ENCODE measurements at regions of chr1 and their contacts with region 1.

Region 1: GRCh38 chr1:150235852-150236613 is at the start of gene ANP32E:
- DNase-seq: peak; percentile 90 to 98
- ATAC-seq: peak; percentile 85 to 96 (median 86)
- H3K4me3 ChIP-seq: peak within 1 kb of the TSS; percentile 97
- H3K4me3 Mint-ChIP-seq: no peak within 1 kb of the TSS
- H3K27ac ChIP-seq: peak within 1 kb of the TSS; percentile 99
- H3K27ac Mint-ChIP-seq: no peak within 1 kb of the TSS
- H3K4me1 ChIP-seq: peaks cover 14% of the 10 kb centered on the region
- H3K4me1 Mint-ChIP-seq: peaks cover 16 to 19% of the 10 kb centered on the region in 2 donors
- H3K27me3 ChIP-seq: no peaks in the 10 kb centered on the region
- H3K27me3 Mint-ChIP-seq: no peaks in the 10 kb centered on the region
- CTCF ChIP-seq: no peak
- total RNA-seq, gene ANP32E: 50.7 to 56.9 (median 55.2) TPM

Region 2: DNA sequence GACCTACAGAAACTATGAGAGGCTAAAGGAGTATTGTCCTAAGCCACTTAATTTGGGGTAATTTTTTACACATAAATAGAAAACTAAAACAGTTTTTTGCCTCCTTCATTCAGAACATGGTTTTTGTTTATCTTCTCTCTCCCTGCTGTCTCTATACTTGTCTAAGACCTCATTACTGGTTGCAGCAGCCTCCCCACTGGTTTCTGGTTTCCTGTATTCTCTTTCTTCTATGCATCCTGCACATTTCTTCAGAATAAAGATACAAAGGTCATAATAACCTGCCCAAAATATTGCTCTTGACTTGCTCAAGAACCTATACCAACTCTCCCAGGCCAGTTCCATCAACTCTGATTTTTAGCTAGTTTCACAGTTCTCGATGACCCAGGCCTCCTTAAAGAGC is 356.5 kb before region 1 on chr1:
- intact Hi-C with region 1: no loop called
- DNase-seq: peak in 1 of 2 donors; percentile 56
- ATAC-seq: no peak
- H3K4me3 ChIP-seq: no peak overlapping the region
- H3K4me3 Mint-ChIP-seq: no peak overlapping the region
- H3K27ac ChIP-seq: no peak overlapping the region
- H3K27ac Mint-ChIP-seq: no peak overlapping the region
- H3K4me1 ChIP-seq: peaks cover 5% of the 10 kb centered on the region
- H3K4me1 Mint-ChIP-seq: peaks cover 7 to 9% of the 10 kb centered on the region in 2 donors
- H3K27me3 ChIP-seq: no peaks in the 10 kb centered on the region
- H3K27me3 Mint-ChIP-seq: no peaks in the 10 kb centered on the region
- CTCF ChIP-seq: no peak

Region 3: DNA sequence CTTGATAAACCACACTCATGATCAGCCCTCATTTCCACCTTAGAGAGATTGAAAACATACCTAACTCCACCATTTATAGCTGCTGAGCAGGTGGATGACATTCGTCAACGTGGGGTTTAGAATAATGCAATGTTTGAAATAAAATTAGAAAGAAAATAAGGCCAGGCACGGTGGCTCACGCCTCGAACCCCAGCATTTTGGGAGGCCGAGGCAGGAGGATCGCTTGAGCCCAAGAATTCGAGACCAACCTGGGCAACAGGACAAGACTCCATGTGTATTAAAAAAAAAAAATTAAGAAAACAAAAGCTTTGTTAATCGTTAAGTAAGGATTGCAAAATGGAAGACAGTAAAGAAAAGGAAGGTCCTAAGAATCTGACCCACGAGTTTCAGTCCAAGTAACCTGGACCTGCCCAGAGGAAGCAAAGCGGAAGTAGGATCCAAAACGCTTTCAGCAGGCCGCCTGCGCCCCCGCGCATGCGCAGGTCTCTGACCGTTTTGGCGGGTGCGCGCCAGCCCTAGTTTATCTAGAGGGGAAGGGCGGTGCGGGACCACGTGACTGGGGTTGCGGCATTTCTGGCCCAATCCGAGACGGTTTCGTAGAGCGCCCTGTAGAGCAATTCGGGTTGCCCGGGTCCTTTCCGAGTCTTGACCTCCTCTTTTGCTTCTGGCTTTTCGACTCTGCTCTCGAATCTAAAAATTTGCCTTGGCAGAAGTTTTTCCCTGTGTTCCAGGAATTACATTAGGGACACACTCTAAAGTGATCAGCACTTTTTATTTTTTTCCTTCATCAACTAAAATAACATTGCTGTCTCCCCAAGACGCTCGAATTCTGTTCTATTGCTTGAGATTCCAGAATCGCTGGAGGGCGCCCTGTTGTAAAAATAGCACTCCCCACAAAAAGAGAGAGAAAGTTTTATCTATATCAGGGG is 22.6 kb before region 1 on chr1:
- intact Hi-C with region 1: loop called (anchors 1 kb)
- DNase-seq: peak; percentile 88 to 96
- ATAC-seq: peak; percentile 98 to 100 (median 99)
- H3K4me3 ChIP-seq: peak overlapping the region; percentile 59
- H3K4me3 Mint-ChIP-seq: peak overlapping the region; percentile 91
- H3K27ac ChIP-seq: peak overlapping the region; percentile 89
- H3K27ac Mint-ChIP-seq: peak overlapping the region; percentile 96 to 97
- H3K4me1 ChIP-seq: peaks cover 11% of the 10 kb centered on the region
- H3K4me1 Mint-ChIP-seq: peaks cover 7 to 12% of the 10 kb centered on the region in 2 donors
- H3K27me3 ChIP-seq: no peaks in the 10 kb centered on the region
- H3K27me3 Mint-ChIP-seq: no peaks in the 10 kb centered on the region
- CTCF ChIP-seq: peak; percentile 54

Region 4: DNA sequence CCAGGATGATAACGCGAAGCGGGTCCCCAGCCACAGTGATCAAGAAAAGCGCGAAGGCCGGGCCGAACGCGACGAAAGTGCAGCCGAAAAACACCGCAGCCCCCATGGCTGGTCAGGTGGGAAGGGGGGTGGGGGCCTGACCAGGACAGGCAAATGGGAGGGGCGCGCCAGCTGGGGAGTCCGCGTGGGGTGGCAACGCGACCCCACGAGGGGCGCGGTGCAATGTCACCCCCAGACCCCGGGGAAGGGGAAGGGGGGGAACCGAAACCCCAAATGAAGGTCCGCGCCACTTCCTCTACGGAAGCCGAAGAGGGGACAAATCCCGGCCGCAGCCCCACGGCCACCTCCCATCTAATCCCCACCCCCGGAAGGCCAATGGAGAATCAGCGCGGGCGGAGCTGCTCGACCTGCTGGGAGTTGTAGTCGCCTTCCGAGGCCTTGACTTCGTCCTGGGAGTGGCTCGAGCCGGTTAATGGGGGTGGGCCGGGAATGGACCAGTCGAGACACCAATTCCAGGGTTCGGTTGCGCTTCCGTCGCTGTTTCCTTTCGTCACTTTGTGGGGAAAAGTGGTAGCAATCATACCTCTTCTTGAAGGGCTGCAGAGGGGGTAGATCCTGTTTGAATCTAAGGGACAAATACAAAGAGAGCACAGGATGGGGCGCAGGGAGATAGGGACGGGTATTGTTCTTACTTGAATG is 32.8 kb after region 1 on chr1 and contains the start of gene APH1A:
- intact Hi-C with region 1: loop called (anchors 2 kb)
- DNase-seq: peak; percentile 83 to 95
- ATAC-seq: peak; percentile 94 to 95 (median 94)
- H3K4me3 ChIP-seq: peak within 1 kb of the TSS; percentile 86
- H3K4me3 Mint-ChIP-seq: peak within 1 kb of the TSS; percentile 98
- H3K27ac ChIP-seq: peak within 1 kb of the TSS; percentile 89
- H3K27ac Mint-ChIP-seq: peak within 1 kb of the TSS; percentile 93 to 94
- H3K4me1 ChIP-seq: peaks cover 26% of the 10 kb centered on the region
- H3K4me1 Mint-ChIP-seq: peaks cover 21 to 31% of the 10 kb centered on the region in 2 donors
- H3K27me3 ChIP-seq: no peaks in the 10 kb centered on the region
- H3K27me3 Mint-ChIP-seq: peaks cover 9 to 17% of the 10 kb centered on the region in 2 donors
- CTCF ChIP-seq: no peak
- total RNA-seq, gene APH1A: 133 to 153 (median 143) TPM

Region 5: DNA sequence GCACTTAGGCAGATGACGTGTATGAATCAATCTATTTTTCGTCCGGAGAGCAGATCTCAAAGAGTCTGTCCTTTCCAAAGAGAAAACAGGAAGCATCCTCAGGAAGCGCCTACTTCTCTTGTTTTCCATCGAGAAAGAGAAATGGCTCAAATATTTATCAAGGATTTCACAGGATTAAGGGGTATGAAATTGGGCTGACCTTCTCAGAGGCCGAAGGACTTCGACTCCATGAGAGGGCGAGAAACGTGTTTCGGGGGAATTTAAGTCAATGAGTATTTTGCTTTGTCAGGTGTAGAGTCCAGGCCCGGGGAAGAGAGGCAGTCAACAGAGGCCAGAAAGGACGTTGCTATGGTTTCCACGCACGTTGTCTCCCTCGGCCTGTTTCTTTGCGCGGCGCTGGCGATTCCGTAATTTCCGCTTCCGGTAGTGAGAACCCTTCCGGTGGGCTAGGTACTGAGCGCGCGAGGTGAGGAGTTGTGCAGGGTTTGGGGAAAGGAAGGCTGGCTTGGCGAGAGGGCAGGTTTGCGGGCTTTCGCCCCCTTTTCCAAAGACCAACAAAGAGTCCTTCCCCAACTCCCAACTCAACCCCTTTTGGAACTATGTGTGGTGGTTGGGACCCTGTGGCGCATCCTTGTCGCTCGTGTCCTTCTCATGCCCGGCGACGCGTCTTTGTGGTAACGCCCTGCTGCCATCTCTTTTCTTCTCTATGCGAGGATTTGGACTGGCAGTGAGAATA is 57.6 kb after region 1 on chr1 and contains the start of gene MRPS21:
- intact Hi-C with region 1: loop called (anchors 2 kb)
- DNase-seq: peak; percentile 80 to 95
- ATAC-seq: peak; percentile 96 to 98 (median 97)
- H3K4me3 ChIP-seq: peak within 1 kb of the TSS; percentile 72
- H3K4me3 Mint-ChIP-seq: peak within 1 kb of the TSS; percentile 89
- H3K27ac ChIP-seq: peak within 1 kb of the TSS; percentile 96
- H3K27ac Mint-ChIP-seq: peak within 1 kb of the TSS; percentile 96 to 97
- H3K4me1 ChIP-seq: peaks cover 15% of the 10 kb centered on the region
- H3K4me1 Mint-ChIP-seq: peaks cover 23 to 25% of the 10 kb centered on the region in 2 donors
- H3K27me3 ChIP-seq: no peaks in the 10 kb centered on the region
- H3K27me3 Mint-ChIP-seq: peaks cover 4 to 7% of the 10 kb centered on the region in 2 donors
- CTCF ChIP-seq: no peak
- total RNA-seq, gene MRPS21: 40.9 to 50.9 (median 42.2) TPM

Region 6: GRCh38 chr1:150321826-150322166 is 85.8 kb after region 1 on chr1:
- intact Hi-C with region 1: loop called (anchors 1 kb)
- DNase-seq: peak in 1 of 2 donors; percentile 40
- ATAC-seq: peak in 1 of 3 donors; percentile 12
- H3K4me3 ChIP-seq: peak overlapping the region; percentile 85
- H3K4me3 Mint-ChIP-seq: peak overlapping the region; percentile 100
- H3K27ac ChIP-seq: peak overlapping the region; percentile 89
- H3K27ac Mint-ChIP-seq: peak overlapping the region; percentile 99 to 100
- H3K4me1 ChIP-seq: peaks cover 12% of the 10 kb centered on the region
- H3K4me1 Mint-ChIP-seq: peaks cover 22 to 29% of the 10 kb centered on the region in 2 donors
- H3K27me3 ChIP-seq: no peaks in the 10 kb centered on the region
- H3K27me3 Mint-ChIP-seq: peaks cover 0 to 3% of the 10 kb centered on the region in 2 donors
- CTCF ChIP-seq: no peak

Region 7: GRCh38 chr1:150363426-150364230 is 127.6 kb after region 1 on chr1 and contains the start of gene RPRD2:
- intact Hi-C with region 1: loop called (anchors 1 kb)
- DNase-seq: peak; percentile 94 to 100
- ATAC-seq: peak; percentile 91 to 99 (median 95)
- H3K4me3 ChIP-seq: peak within 1 kb of the TSS; percentile 72
- H3K4me3 Mint-ChIP-seq: peak within 1 kb of the TSS; percentile 96
- H3K27ac ChIP-seq: peak within 1 kb of the TSS; percentile 97
- H3K27ac Mint-ChIP-seq: peak within 1 kb of the TSS; percentile 96 to 98
- H3K4me1 ChIP-seq: peaks cover 14% of the 10 kb centered on the region
- H3K4me1 Mint-ChIP-seq: peaks cover 35 to 38% of the 10 kb centered on the region in 2 donors
- H3K27me3 ChIP-seq: no peaks in the 10 kb centered on the region
- H3K27me3 Mint-ChIP-seq: no peaks in the 10 kb centered on the region
- CTCF ChIP-seq: no peak
- total RNA-seq, gene RPRD2: 30.3 to 38.8 (median 34.0) TPM

Region 8: GRCh38 chr1:152185544-152186391 is 1949.7 kb after region 1 on chr1:
- intact Hi-C with region 1: no loop called
- DNase-seq: peak; percentile 17 to 73
- ATAC-seq: peak; percentile 56 to 76 (median 60)
- H3K4me3 ChIP-seq: no peak overlapping the region
- H3K4me3 Mint-ChIP-seq: no peak overlapping the region
- H3K27ac ChIP-seq: no peak overlapping the region
- H3K27ac Mint-ChIP-seq: no peak overlapping the region
- H3K4me1 ChIP-seq: peaks cover 15% of the 10 kb centered on the region
- H3K4me1 Mint-ChIP-seq: peaks cover 6 to 14% of the 10 kb centered on the region in 2 donors
- H3K27me3 ChIP-seq: no peaks in the 10 kb centered on the region
- H3K27me3 Mint-ChIP-seq: no peaks in the 10 kb centered on the region
- CTCF ChIP-seq: peak; percentile 84

Measured in natural killer cell (primary cell).